ENCODE measurements at regions of chr16 and their contacts with region 1.

Region 1: GRCh38 chr16:18801197-18801972 is at the start of gene ARL6IP1:
- DNase-seq: peak; percentile 98
- H3K4me3 Mint-ChIP-seq: peak within 1 kb of the TSS; percentile 95
- H3K27ac Mint-ChIP-seq: peak within 1 kb of the TSS; percentile 97
- H3K4me1 Mint-ChIP-seq: peaks cover 71% of the 10 kb centered on the region
- H3K27me3 Mint-ChIP-seq: no peaks in the 10 kb centered on the region
- total RNA-seq, gene ARL6IP1: 105 and 109 TPM in 2 replicates

Region 2: GRCh38 chr16:18789850-18790724 is 11.3 kb before region 1 on chr16 and contains the start of gene RPS15A:
- intact Hi-C with region 1: loop called (anchors 1 kb)
- DNase-seq: peak; percentile 92
- H3K4me3 Mint-ChIP-seq: peak within 1 kb of the TSS; percentile 95
- H3K27ac Mint-ChIP-seq: peak within 1 kb of the TSS; percentile 85
- H3K4me1 Mint-ChIP-seq: peaks cover 64% of the 10 kb centered on the region
- H3K27me3 Mint-ChIP-seq: peaks cover 1% of the 10 kb centered on the region
- total RNA-seq, gene RPS15A: 1,849 and 1,857 TPM in 2 replicates

Region 3: DNA sequence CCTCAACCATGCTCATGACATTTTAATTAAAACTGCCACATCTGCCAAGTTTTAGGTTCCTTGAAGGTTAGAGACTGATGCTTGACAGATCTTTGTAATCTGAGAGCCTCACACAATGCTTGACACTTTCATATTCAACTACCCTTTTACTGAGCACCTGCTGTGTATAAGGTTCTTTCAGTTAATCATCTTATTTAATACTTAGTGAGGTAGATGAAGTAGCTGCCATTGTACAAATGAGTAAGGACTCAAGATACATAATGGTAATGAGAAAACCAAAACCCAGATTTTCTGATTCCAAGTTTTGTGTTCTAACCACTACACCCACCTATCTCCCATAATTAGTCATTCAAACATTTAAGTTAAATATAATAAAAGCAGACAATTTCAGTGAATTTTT is 35.3 kb after region 1 on chr16:
- intact Hi-C with region 1: loop called (anchors 1 kb)
- DNase-seq: no peak
- H3K4me3 Mint-ChIP-seq: no peak overlapping the region
- H3K27ac Mint-ChIP-seq: peak overlapping the region; percentile 91
- H3K4me1 Mint-ChIP-seq: peaks cover 19% of the 10 kb centered on the region
- H3K27me3 Mint-ChIP-seq: no peaks in the 10 kb centered on the region

Region 4: GRCh38 chr16:18945233-18945632 is 143.8 kb after region 1 on chr16:
- intact Hi-C with region 1: loop called (anchors 5 kb)
- DNase-seq: no peak
- H3K4me3 Mint-ChIP-seq: no peak overlapping the region
- H3K27ac Mint-ChIP-seq: no peak overlapping the region
- H3K4me1 Mint-ChIP-seq: peaks cover 37% of the 10 kb centered on the region
- H3K27me3 Mint-ChIP-seq: no peaks in the 10 kb centered on the region

Region 5: DNA sequence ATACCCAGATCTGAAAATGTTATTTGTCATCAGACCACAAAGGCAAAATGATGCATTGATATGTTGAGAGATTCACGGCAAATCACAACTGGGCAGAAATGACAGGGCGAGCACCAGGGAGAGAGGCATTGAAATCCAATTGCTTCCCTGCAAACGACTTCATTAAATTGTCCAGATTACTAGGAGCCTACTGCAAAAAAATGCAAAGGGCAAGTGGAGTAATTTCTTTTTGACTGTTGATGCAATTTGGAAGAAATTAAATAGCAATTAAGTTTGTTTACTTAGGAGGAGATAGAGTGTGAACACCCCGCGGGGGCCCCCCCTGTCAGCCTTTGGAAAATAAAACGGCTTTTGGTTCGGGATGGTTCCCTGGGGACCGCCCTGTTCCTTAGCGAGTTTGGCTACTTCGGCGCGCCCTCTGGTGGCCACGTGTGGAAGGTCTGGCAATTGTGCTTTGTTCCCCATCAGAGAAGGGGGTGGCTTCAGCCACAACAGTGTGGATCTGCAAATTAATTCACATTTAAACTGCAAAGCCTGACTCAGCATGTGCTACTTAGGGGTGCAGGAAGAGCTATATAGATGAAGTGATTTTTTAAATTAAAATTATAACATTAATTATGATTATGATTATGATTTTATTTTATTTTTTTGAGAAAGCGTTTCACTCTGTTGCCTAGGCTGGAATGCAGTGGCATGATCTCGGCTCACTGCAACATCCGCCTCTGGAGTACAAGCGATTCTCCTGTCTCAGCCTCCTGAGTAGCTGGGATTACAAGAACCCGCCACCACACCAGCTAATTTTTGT is 167.9 kb after region 1 on chr16:
- intact Hi-C with region 1: loop called (anchors 1 kb)
- DNase-seq: peak; percentile 73
- H3K4me3 Mint-ChIP-seq: peak overlapping the region; percentile 59
- H3K27ac Mint-ChIP-seq: no peak overlapping the region
- H3K4me1 Mint-ChIP-seq: peaks cover 12% of the 10 kb centered on the region
- H3K27me3 Mint-ChIP-seq: peaks cover 5% of the 10 kb centered on the region

Region 6: GRCh38 chr16:19005561-19006445 is 204.4 kb after region 1 on chr16:
- intact Hi-C with region 1: no loop called
- DNase-seq: no peak
- H3K4me3 Mint-ChIP-seq: no peak overlapping the region
- H3K27ac Mint-ChIP-seq: no peak overlapping the region
- H3K4me1 Mint-ChIP-seq: no peaks in the 10 kb centered on the region
- H3K27me3 Mint-ChIP-seq: no peaks in the 10 kb centered on the region

Region 7: GRCh38 chr16:19555162-19555937 is 754.0 kb after region 1 on chr16 and contains the start of gene VPS35L:
- intact Hi-C with region 1: loop called (anchors 1 kb)
- DNase-seq: peak; percentile 93
- H3K4me3 Mint-ChIP-seq: peak within 1 kb of the TSS; percentile 93
- H3K27ac Mint-ChIP-seq: peak within 1 kb of the TSS; percentile 93
- H3K4me1 Mint-ChIP-seq: peaks cover 14% of the 10 kb centered on the region
- H3K27me3 Mint-ChIP-seq: no peaks in the 10 kb centered on the region
- total RNA-seq, gene VPS35L: 36.2 and 37.4 TPM in 2 replicates